ENCODE measurements at regions of chr22 and their contacts with region 1.

Region 1: DNA sequence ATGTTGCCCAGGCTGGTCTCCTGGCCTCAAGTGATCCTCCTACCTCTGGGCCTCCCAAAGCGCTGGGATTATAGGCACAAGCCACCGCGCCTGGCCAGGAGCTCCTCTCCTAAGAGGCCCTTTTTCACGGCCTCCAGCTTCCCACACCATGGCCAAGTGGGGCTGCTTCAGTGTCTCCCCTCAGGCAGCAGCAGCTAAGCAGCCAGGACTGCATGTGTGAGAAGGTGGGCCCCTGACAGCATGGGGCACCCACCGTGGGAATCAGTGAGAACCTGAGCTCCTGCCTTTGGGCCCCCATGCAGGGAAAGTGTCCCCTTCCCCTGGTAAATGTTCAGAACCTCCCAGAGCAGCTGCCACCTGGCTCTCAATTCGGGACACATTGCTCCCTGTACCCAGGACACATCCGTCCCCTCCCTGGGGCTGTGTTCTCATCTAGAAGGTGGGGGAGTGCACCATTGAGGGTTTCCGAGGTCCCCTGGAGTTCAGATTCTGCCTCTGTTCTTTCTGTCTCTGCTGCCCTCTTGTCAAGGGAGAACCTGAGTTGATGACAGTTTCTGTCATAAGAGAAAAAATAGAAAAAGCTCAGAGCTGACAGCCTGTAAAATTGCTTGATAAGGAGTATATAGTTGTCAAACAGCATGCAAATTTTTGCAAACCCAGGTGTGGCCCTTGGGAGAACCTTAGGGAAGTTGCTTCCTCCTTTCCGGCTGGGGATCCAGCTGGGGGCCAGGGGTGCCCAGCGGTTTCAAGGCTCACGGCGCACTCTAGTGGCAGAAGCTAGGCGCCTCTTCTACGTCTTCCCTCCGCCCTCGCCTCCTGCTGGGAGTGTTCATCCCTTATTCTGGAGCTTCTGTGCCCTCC is 29.7 kb downstream of the FAM83F start:
- DNase-seq: peak; percentile 75
- ATAC-seq: peak; percentile 85
- H3K4me3 Mint-ChIP-seq: no peak overlapping the region
- H3K27ac Mint-ChIP-seq: no peak overlapping the region
- H3K4me1 Mint-ChIP-seq: peaks cover 4% of the 10 kb centered on the region
- H3K27me3 Mint-ChIP-seq: no peaks in the 10 kb centered on the region

Region 2: GRCh38 chr22:39559454-39560105 is 464.9 kb before region 1 on chr22:
- CTCF ChIA-PET with region 1: interaction called, 13 read pairs
- DNase-seq: no peak
- ATAC-seq: no peak
- H3K4me3 Mint-ChIP-seq: no peak overlapping the region
- H3K27ac Mint-ChIP-seq: no peak overlapping the region
- H3K4me1 Mint-ChIP-seq: peaks cover 6% of the 10 kb centered on the region
- H3K27me3 Mint-ChIP-seq: peaks cover 44% of the 10 kb centered on the region

Region 3: DNA sequence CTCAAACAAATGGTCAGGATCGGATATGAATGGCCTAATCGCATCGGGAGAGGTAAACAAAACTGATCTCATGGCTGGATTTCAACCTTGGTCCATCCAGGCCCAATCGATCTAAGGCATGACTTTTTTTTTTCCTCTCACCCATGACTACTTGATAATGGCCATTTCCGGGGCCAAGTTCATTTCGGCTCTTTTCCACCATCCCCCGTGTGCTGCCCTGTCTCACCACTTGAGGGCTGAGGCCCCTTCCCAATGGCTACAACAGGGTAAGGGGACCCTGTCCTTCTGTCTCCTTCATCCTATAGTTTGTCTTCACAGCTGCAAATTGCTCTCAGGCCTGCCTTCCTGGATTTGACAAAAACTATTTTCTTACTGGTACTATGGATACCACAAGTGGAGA is 96.9 kb before region 1 on chr22:
- CTCF ChIA-PET with region 1: interaction called, 21 read pairs
- DNase-seq: peak; percentile 69
- ATAC-seq: peak; percentile 33
- H3K4me3 Mint-ChIP-seq: no peak overlapping the region
- H3K27ac Mint-ChIP-seq: no peak overlapping the region
- H3K4me1 Mint-ChIP-seq: peaks cover 37% of the 10 kb centered on the region
- H3K27me3 Mint-ChIP-seq: no peaks in the 10 kb centered on the region

Region 4: GRCh38 chr22:39943337-39943736 is 81.1 kb before region 1 on chr22:
- CTCF ChIA-PET with region 1: interaction called, 15 read pairs
- DNase-seq: peak; percentile 62
- ATAC-seq: peak; percentile 17
- H3K4me3 Mint-ChIP-seq: peak overlapping the region; percentile 43
- H3K27ac Mint-ChIP-seq: peak overlapping the region; percentile 88
- H3K4me1 Mint-ChIP-seq: peaks cover 88% of the 10 kb centered on the region
- H3K27me3 Mint-ChIP-seq: no peaks in the 10 kb centered on the region

Region 5: GRCh38 chr22:39999144-39999757 is 25.2 kb before region 1 on chr22:
- CTCF ChIA-PET with region 1: interaction called, 11 read pairs
- DNase-seq: no peak
- ATAC-seq: no peak
- H3K4me3 Mint-ChIP-seq: no peak overlapping the region
- H3K27ac Mint-ChIP-seq: no peak overlapping the region
- H3K4me1 Mint-ChIP-seq: no peaks in the 10 kb centered on the region
- H3K27me3 Mint-ChIP-seq: peaks cover 43% of the 10 kb centered on the region

Region 6: GRCh38 chr22:40036591-40037225 is 12.3 kb after region 1 on chr22:
- CTCF ChIA-PET with region 1: interaction called, 38 read pairs
- DNase-seq: peak; percentile 71
- ATAC-seq: peak; percentile 84
- H3K4me3 Mint-ChIP-seq: no peak overlapping the region
- H3K27ac Mint-ChIP-seq: no peak overlapping the region
- H3K4me1 Mint-ChIP-seq: peaks cover 7% of the 10 kb centered on the region
- H3K27me3 Mint-ChIP-seq: peaks cover 22% of the 10 kb centered on the region

Region 7: DNA sequence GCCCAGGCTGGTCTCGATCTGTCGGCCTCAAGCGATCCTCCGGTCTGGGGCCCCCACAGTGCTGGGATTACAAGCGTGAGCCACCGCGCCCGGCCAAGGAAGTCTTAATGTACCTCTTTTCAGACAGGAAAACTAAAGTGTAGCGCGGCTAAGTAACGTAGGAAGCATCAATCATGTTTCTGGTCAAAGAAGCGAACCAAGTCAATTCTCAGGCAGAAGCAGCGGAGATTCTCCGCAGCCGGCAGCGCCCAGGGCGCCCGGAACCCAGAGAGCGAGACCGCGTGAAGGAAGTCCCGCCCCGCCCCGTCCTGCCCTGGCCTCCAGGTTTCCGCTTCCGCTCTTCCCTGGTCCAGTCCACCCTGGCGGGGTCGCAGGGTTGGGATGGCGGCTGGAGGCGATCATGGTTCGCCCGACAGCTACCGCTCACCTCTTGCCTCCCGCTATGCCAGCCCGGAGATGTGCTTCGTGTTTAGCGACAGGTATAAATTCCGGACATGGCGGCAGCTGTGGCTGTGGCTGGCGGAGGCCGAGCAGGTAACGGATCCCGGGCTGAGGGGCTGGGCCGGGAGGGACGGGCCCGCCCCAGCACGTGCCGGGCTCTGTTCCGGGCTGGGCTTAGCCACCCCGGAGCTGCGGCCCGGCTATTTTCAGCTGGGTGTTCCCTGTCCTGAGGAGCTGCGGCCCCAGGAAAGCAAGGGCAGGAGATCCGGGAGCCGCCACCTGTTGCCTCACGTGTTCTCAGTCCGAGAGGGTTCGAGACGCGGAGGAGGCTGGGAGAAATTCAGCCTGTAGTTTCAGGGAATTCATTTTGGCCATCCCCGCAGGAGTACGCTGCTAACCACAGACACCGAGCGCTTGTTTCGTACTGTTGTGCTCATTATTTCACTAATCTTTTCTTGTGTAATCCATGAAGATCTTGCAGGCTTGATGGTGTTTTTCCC is 322.0 kb after region 1 on chr22 and contains the start of gene ADSL:
- CTCF ChIA-PET with region 1: interaction called, 19 read pairs
- DNase-seq: peak; percentile 90
- ATAC-seq: peak; percentile 92
- H3K4me3 Mint-ChIP-seq: peak within 1 kb of the TSS; percentile 99
- H3K27ac Mint-ChIP-seq: peak within 1 kb of the TSS; percentile 99
- H3K4me1 Mint-ChIP-seq: peaks cover 50% of the 10 kb centered on the region
- H3K27me3 Mint-ChIP-seq: no peaks in the 10 kb centered on the region
- total RNA-seq, gene ADSL: 98.3 to 109 TPM